Endothelial cell of umbilical vein (primary cell): ENCODE measurements at regions of chr14 and their contacts with region 1.

Region 1: GRCh38 chr14:53539489-53540126 is 386.5 kb upstream of the DDHD1 start:
- DNase-seq: peak; percentile 94
- H3K4me3 ChIP-seq: no peak overlapping the region
- H3K27ac ChIP-seq: no peak overlapping the region
- H3K4me1 ChIP-seq: peaks cover 43% of the 10 kb centered on the region
- H3K27me3 ChIP-seq: no peaks in the 10 kb centered on the region
- CTCF ChIP-seq: peak; percentile 74 to 82
- POLR2A ChIP-seq: no peak

Region 2: DNA sequence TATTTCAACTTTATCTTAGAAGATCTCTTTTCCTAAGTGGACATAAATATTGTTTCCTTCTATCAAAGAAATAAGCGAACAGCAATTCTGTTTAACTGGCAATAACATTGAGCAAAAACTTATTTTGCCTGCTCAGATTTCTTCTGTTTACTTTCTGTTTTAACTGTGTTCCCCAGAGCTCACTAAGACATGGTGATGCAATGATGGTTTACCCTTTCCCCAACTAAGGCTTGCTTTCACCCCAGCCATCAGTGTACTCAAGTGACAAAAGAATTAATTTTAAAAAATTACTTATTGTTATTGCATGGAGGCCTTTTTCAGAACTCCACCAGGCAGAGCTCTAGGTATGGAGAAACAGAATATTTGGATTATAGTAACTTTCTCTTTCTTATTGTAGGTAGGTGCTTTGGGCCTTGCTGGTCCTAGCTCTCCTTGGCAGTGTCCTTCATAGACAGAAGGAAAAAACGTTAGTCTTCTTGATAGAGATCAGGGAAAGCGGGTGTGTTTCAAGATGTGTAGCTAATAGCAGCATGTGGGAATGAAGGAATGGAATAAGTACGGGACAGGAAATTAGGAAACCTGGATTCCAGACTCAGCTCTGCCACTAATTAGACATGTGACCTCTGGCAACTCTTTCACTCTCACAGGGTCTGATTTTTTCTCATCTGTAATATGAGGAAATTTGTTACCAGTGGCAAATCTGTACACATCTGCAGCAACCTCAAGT is 371.8 kb before region 1 on chr14:
- CTCF ChIA-PET with region 1: no interaction called
- POLR2A ChIA-PET with region 1: no interaction called
- dilution Hi-C with region 1: no loop called
- intact Hi-C with region 1: no loop called
- DNase-seq: no peak
- H3K4me3 ChIP-seq: no peak overlapping the region
- H3K27ac ChIP-seq: no peak overlapping the region
- H3K4me1 ChIP-seq: no peaks in the 10 kb centered on the region
- H3K27me3 ChIP-seq: no peaks in the 10 kb centered on the region
- CTCF ChIP-seq: no peak
- POLR2A ChIP-seq: no peak

Region 3: GRCh38 chr14:53517270-53517960 is 22.2 kb before region 1 on chr14:
- CTCF ChIA-PET with region 1: no interaction called
- POLR2A ChIA-PET with region 1: no interaction called
- dilution Hi-C with region 1: no loop called
- intact Hi-C with region 1: no loop called
- DNase-seq: no peak
- H3K4me3 ChIP-seq: no peak overlapping the region
- H3K27ac ChIP-seq: no peak overlapping the region
- H3K4me1 ChIP-seq: no peaks in the 10 kb centered on the region
- H3K27me3 ChIP-seq: peaks cover 2 to 9% of the 10 kb centered on the region in 2 experiments
- CTCF ChIP-seq: no peak
- POLR2A ChIP-seq: no peak

Region 4: GRCh38 chr14:53663709-53664108 is 124.1 kb after region 1 on chr14:
- CTCF ChIA-PET with region 1: interaction called, 3 read pairs
- POLR2A ChIA-PET with region 1: no interaction called
- dilution Hi-C with region 1: no loop called
- intact Hi-C with region 1: loop called (anchors 1 kb)
- DNase-seq: peak; percentile 51
- H3K4me3 ChIP-seq: no peak overlapping the region
- H3K27ac ChIP-seq: no peak overlapping the region
- H3K4me1 ChIP-seq: peaks cover 9% of the 10 kb centered on the region
- H3K27me3 ChIP-seq: no peaks in the 10 kb centered on the region
- CTCF ChIP-seq: peak; percentile 18 to 46
- POLR2A ChIP-seq: no peak

Region 5: DNA sequence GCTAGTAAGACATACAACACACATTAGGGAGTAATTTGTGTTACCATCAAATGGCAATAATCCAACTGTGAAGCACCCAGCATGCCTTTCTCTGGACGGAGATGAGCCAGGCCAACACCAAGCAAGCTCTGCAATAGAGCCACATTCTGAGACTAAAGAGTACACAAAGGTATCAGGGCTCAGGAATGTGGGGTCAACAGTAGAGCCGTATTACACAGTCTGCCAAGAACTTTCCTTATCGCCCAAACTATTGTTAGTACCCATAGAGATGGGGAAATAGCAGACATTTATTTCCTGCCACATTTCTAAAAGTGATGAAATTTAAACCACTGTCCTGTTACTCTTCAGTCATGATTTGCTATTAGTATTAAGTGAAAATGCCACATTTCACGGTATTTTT is 303.3 kb after region 1 on chr14:
- CTCF ChIA-PET with region 1: no interaction called
- POLR2A ChIA-PET with region 1: no interaction called
- dilution Hi-C with region 1: no loop called
- intact Hi-C with region 1: loop called (anchors 2 kb)
- DNase-seq: peak; percentile 75
- H3K4me3 ChIP-seq: no peak overlapping the region
- H3K27ac ChIP-seq: peak overlapping the region; percentile 87
- H3K4me1 ChIP-seq: peaks cover 34% of the 10 kb centered on the region
- H3K27me3 ChIP-seq: no peaks in the 10 kb centered on the region
- CTCF ChIP-seq: no peak
- POLR2A ChIP-seq: peak; percentile 67

Region 6: DNA sequence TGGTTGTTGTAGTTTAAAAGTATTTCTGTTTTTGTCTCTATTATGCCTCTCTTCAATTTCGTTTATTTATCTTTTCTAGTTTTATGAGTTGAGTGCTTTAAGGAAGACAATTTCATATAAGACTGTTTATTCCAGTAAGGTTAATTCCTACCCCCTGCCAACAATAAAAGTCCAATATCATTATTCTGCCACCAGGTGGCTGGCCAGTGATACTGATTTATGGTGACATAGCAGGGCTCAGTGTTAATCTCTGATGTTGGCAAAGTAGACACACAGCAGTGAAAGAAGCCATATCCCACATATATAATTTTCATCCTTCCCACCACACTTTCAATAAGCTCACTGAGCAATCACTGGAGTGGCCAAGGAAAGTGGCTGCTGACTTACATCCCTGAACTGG is 486.1 kb after region 1 on chr14:
- CTCF ChIA-PET with region 1: no interaction called
- POLR2A ChIA-PET with region 1: no interaction called
- dilution Hi-C with region 1: no loop called
- intact Hi-C with region 1: loop called (anchors 1 kb)
- DNase-seq: peak; percentile 73
- H3K4me3 ChIP-seq: no peak overlapping the region
- H3K27ac ChIP-seq: no peak overlapping the region
- H3K4me1 ChIP-seq: no peaks in the 10 kb centered on the region
- H3K27me3 ChIP-seq: no peaks in the 10 kb centered on the region
- CTCF ChIP-seq: peak; percentile 27 to 46
- POLR2A ChIP-seq: no peak

Region 7: GRCh38 chr14:54338696-54339317 is 799.2 kb after region 1 on chr14:
- CTCF ChIA-PET with region 1: interaction called, 69 read pairs
- POLR2A ChIA-PET with region 1: interaction called, 3 read pairs
- dilution Hi-C with region 1: loop called (anchors 25 kb)
- intact Hi-C with region 1: loop called (anchors 1 kb)
- DNase-seq: peak; percentile 78
- H3K4me3 ChIP-seq: no peak overlapping the region
- H3K27ac ChIP-seq: no peak overlapping the region
- H3K4me1 ChIP-seq: peaks cover 10% of the 10 kb centered on the region
- H3K27me3 ChIP-seq: no peaks in the 10 kb centered on the region
- CTCF ChIP-seq: peak; percentile 63 to 68
- POLR2A ChIP-seq: no peak